Tibial artery (tissue), 4 donors: ENCODE measurements at regions of chr5 and their contacts with region 1.

Region 1: DNA sequence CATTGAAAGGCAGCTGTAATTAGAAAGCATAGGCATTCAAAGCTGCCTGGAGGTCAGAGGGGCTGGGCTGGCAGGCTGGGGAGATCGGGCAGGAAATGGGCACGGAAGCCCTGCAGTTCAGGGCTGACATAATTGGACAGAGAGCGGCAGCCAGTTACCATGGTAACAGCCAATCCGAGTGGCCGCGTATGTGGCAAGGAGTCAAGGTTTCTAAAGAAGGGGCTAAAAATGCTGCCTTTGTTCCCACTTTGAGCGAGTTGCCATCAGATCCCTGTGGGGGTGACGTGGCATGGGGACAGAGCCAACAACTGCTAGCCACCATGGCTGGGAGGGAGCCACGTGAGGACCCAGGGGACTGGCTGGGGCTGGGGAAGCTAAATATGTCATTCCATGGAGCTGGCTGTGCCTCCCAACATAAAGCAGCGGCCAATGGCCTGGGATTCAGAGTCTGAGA is 44.7 kb upstream of the NDFIP1 start:
- DNase-seq: peak; percentile 88 to 98
- H3K4me3 ChIP-seq: peak overlapping the region; percentile 0 to 1
- H3K27ac ChIP-seq: peak overlapping the region; percentile 82 to 86
- H3K4me1 ChIP-seq: peaks cover 0 to 43% (median 32%) of the 10 kb centered on the region in 4 donors
- H3K27me3 ChIP-seq: no peaks in the 10 kb centered on the region
- CTCF ChIP-seq: no peak

Region 2: GRCh38 chr5:141524604-141525597 is 539.0 kb before region 1 on chr5:
- intact Hi-C with region 1: no loop called
- DNase-seq: peak; percentile 85 to 93
- H3K4me3 ChIP-seq: no peak overlapping the region
- H3K27ac ChIP-seq: peak overlapping the region; percentile 59 to 61
- H3K4me1 ChIP-seq: peaks cover 0 to 56% (median 9%) of the 10 kb centered on the region in 4 donors
- H3K27me3 ChIP-seq: no peaks in the 10 kb centered on the region
- CTCF ChIP-seq: peak; percentile 99 to 100

Region 3: DNA sequence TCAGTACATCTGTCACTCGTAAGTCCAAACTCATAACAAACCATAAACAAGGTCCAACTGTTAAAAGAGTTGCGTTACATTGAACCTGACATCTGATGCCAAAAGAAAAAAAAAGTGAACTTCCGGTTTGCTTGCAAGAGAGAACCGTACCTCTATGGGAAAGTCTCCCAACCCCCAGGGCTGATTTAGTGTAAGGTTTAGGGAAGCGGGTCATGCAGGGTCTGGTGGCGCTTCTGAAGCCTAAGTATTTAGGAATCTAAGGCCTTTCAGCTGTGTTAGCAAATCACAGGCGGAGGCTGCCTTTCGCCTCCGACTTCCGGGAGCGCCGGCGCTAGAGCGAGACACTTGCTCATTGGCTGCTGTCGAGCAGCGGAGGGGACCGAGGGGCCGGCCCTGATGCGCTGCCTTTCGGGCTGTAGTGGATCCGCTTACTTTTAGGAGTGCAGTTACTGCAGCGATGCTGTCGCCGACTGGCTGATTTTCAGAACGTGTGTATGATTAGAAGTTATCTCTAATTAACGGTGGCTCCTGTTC is 39.1 kb before region 1 on chr5:
- intact Hi-C with region 1: no loop called
- DNase-seq: peak; percentile 86 to 92
- H3K4me3 ChIP-seq: peak overlapping the region; percentile 51 to 55
- H3K27ac ChIP-seq: peak overlapping the region; percentile 74 to 90
- H3K4me1 ChIP-seq: peaks cover 0 to 8% (median 1%) of the 10 kb centered on the region in 4 donors
- H3K27me3 ChIP-seq: no peaks in the 10 kb centered on the region
- CTCF ChIP-seq: no peak

Region 4: GRCh38 chr5:142108432-142109330 is 44.8 kb after region 1 on chr5 and contains the start of gene NDFIP1:
- intact Hi-C with region 1: loop called (anchors 5 kb)
- DNase-seq: peak; percentile 85 to 94
- H3K4me3 ChIP-seq: peak within 1 kb of the TSS; percentile 87 to 89
- H3K27ac ChIP-seq: peak within 1 kb of the TSS; percentile 99
- H3K4me1 ChIP-seq: peaks cover 0 to 72% (median 34%) of the 10 kb centered on the region in 4 donors
- H3K27me3 ChIP-seq: no peaks in the 10 kb centered on the region
- CTCF ChIP-seq: peak; percentile 20 to 47